Mucosa of descending colon (tissue), 3 donors: ENCODE measurements at regions of chr13 and their contacts with region 1.

Region 1: DNA sequence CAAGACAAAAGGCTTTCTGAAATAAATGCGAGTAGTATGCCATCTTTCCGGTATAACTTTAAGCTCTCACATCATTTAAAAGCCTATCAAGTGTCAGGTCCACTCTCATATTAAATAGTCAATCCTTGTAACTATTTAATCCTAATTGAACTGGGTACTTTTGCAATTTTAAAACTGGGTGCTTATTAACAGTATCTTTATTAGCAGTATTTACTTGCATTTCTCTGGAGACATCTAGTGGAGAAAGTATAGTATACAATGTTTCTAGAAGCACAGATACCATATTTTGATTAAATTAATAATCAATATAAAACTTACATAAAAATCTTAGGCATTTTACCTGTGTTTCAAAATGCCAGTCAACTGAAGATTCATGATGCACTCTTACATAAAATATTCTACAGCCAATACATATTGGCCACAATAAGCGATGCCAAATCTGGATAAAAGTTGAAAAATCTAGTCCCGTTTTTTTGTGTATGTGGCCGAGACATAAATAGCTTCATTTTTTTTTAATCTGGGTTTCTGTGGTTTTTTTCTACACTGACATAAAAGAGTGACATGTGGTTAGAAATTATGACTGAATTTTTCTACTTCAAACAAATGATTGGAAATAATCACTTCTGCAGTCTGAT is 4.3 kb upstream of the POSTN start:
- DNase-seq: no peak
- ATAC-seq: no peak
- H3K4me3 ChIP-seq: no peak overlapping the region
- H3K4me1 ChIP-seq: no peaks in the 10 kb centered on the region
- CTCF ChIP-seq: no peak

Region 2: DNA sequence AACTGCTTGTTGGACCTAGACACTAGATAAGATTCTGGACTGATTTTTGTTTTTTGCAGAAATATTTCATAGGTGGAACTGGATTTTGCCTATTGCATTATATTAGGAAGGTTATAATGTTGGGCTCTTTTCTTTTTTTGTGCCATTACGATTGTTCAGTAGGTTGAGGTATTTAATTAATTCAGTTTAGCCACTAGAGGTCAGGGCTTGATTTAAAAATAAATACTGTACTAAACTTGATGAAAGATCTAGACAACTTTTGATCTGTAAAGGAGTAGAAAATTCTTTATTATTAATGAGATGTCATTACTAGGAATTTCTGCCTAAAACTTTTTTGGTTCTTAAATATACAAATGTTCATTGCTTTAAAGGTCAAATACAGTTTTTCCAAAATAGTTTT is 528.2 kb before region 1 on chr13:
- intact Hi-C with region 1: loop called (anchors 10 kb)
- DNase-seq: no peak
- ATAC-seq: no peak
- H3K4me3 ChIP-seq: no peak overlapping the region
- H3K4me1 ChIP-seq: no peaks in the 10 kb centered on the region
- CTCF ChIP-seq: no peak

Region 3: DNA sequence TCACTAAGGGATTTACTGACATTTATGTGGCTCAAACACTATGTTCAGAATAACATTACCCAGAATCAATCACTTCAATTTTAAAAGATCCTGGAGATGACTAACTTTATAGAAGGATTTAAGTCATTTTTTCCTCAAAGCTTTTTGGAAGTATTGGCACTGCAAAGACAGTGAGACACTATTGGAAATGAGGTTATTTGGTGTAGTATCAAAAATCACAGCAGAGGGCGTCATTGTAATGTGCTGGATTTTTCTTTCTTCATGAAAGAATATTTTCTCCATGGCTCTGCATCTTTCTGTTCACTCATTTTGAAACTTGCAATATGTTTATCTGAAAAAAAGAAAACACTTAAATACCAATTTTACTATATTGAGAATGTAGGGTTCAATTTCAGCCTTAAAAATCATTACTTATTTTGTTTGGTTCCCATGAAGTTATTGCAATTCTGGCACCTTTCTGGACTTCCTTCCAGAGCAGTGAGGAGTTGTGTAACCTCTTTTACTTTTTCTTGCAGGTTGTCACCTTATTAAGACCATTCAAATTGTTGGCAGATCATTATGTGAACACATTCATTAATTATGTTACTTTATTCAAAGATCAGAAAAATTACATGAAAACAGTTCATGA is 493.7 kb before region 1 on chr13:
- intact Hi-C with region 1: loop called in 1 of 2 experiments (anchors 10 kb)
- DNase-seq: peak in 1 of 3 donors; percentile 13
- ATAC-seq: no peak
- H3K4me3 ChIP-seq: no peak overlapping the region
- H3K4me1 ChIP-seq: no peaks in the 10 kb centered on the region
- CTCF ChIP-seq: peak; percentile 19

Region 4: DNA sequence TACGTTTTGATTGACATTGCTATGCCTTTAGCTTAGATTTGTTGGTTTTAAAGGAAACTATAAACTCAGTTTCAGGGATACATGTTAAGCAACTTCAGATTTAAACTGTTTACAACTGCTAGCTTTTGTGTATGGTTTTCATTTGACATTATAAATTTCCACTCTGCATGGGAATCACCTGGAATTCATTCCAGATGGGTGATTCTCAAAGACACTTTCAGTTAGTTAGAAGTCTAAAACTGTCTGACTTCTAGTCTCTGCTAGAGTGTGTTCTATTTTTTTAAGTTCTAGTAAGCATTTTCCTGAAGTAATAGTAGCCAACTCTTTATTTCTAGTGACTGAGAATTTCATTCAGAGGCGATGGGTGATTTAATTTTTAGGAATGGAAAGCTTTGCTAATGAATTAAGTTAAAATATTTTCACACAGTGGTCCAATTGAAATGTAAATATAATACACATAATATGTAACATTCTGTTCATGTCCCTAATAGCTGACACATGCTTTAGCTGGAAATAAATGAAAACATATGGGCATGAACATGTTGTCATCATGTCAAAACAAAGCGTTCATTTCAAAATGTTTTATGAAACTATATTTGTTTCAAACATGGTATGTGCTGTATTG is 439.1 kb before region 1 on chr13:
- intact Hi-C with region 1: no loop called
- DNase-seq: no peak
- ATAC-seq: no peak
- H3K4me3 ChIP-seq: no peak overlapping the region
- H3K4me1 ChIP-seq: no peaks in the 10 kb centered on the region
- CTCF ChIP-seq: no peak

Region 5: GRCh38 chr13:37648604-37649003 is 45.7 kb after region 1 on chr13:
- intact Hi-C with region 1: no loop called
- DNase-seq: no peak
- ATAC-seq: no peak
- H3K4me3 ChIP-seq: no peak overlapping the region
- H3K4me1 ChIP-seq: no peaks in the 10 kb centered on the region
- CTCF ChIP-seq: no peak